ENCODE measurements at regions of chr18 and their contacts with region 1.

Region 1: GRCh38 chr18:3008541-3008940 is 4.4 kb downstream of the LPIN2 start:
- DNase-seq: no peak
- H3K4me3 ChIP-seq: no peak overlapping the region
- H3K27ac ChIP-seq: no peak overlapping the region
- H3K4me1 ChIP-seq: peaks cover 0 to 6% (median 2%) of the 10 kb centered on the region in 4 experiments; a peak in 3 of 7 replicates
- H3K27me3 ChIP-seq: no peaks in the 10 kb centered on the region
- CTCF ChIP-seq: no peak
- EP300 ChIP-seq: no peak
- POLR2A ChIP-seq: no peak
- RAD21 ChIP-seq: no peak

Region 2: GRCh38 chr18:2985628-2986027 is 22.9 kb before region 1 on chr18:
- CTCF ChIA-PET with region 1: interaction called, 10 read pairs
- POLR2A ChIA-PET with region 1: no interaction called
- DNase-seq: no peak
- H3K4me3 ChIP-seq: no peak overlapping the region
- H3K27ac ChIP-seq: no peak overlapping the region
- H3K4me1 ChIP-seq: peaks cover 0 to 11% (median 9%) of the 10 kb centered on the region in 4 experiments; a peak in 6 of 7 replicates
- H3K27me3 ChIP-seq: no peaks in the 10 kb centered on the region
- CTCF ChIP-seq: peak in 1 of 3 experiments; percentile 44; a peak in 2 of 4 replicates
- EP300 ChIP-seq: no peak
- POLR2A ChIP-seq: no peak
- RAD21 ChIP-seq: peak; percentile 8 to 14; a peak in 1 of 4 replicates

Region 3: DNA sequence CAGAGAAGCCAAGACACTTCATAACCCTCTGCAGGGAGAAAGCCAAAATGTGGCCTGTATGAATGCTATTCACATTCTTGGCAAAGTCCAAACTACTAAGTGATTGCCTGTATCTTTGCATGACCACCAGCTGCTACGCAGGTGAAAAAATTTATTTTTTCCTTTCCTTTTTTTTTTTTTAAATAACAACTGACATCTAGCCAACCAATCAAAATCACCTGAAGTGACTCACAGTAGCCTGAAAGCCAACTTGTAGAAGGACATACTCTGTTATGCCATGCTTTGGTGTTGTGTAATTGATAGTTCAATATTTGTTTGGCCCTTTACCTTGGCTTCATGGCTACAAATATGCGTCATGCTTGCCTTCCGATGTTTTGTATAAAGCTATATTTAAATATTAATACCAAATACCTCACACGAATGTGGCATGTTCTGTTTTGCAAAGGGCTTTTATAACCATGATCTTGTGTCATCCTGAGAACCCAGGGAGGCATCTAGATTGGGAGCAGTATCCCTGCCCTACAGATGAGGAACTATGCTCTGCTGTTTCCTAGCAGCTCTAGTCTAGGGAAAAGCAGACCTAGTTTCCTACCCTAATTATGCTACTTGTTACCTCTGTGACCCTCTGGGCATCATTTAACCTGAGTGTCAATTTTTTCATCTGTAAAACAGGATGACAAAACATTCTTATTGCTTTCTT is 109.1 kb after region 1 on chr18:
- CTCF ChIA-PET with region 1: no interaction called
- POLR2A ChIA-PET with region 1: no interaction called
- DNase-seq: no peak
- H3K4me3 ChIP-seq: no peak overlapping the region
- H3K27ac ChIP-seq: no peak overlapping the region
- H3K4me1 ChIP-seq: peaks cover 0 to 5% (median 2%) of the 10 kb centered on the region in 4 experiments; a peak in 3 of 7 replicates
- H3K27me3 ChIP-seq: no peaks in the 10 kb centered on the region
- CTCF ChIP-seq: no peak
- EP300 ChIP-seq: no peak
- POLR2A ChIP-seq: no peak
- RAD21 ChIP-seq: no peak

Region 4: DNA sequence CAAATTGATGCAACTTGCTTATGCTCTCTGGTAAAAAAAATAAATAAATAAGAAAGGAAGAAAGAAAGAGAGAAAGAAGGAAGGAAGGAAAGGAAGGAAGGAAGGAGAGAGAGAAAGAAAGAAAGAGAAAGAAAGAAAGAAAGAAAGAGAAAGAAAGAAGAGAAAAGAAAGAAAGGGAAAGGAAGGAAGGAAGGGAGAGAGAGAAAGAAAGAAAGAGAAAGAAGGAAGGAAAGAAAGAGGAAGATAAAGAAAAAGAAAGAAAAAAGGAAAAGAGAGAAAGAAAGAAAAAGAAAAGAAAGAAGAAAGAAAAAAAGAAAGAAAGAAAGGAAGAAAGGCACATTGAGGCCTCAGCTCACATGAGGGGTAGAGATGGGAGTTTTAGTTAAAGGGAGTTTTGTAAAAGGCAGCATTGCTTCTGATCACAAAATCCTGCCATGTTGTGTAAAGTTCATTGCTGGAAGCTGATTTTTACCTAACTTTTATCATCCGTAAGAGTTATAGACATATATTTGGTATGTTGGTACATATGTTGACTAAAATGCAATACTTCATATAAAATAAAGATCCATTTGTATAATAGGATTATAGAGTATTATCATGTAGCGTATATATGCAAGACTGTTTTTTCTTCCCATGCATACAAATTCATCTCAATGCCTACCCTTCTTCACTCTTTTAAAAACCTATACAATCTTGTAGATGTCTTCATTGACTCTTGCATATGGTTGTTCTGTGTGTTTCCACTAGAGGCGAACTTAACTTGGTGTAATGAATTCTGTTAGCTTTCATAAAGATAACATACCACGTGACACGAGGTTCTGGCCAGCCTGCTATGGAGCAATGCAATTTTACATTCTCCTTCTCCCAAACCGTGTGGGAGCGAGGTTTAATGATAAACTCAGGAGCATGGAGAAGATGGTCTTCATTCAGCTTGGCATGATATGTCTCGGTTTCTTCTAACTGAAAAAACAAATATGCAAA is 178.4 kb after region 1 on chr18:
- CTCF ChIA-PET with region 1: no interaction called
- POLR2A ChIA-PET with region 1: no interaction called
- DNase-seq: no peak
- H3K4me3 ChIP-seq: no peak overlapping the region
- H3K27ac ChIP-seq: no peak overlapping the region
- H3K4me1 ChIP-seq: no peaks in the 10 kb centered on the region
- H3K27me3 ChIP-seq: no peaks in the 10 kb centered on the region
- CTCF ChIP-seq: no peak
- EP300 ChIP-seq: no peak
- POLR2A ChIP-seq: no peak
- RAD21 ChIP-seq: no peak